HEK293T (cell line): ENCODE measurements at regions of chr12 and their contacts with region 1.

Region 1: GRCh38 chr12:51341259-51342007 is 5.0 kb downstream of the CELA1 start:
- DNase-seq: peak; percentile 71

Region 2: DNA sequence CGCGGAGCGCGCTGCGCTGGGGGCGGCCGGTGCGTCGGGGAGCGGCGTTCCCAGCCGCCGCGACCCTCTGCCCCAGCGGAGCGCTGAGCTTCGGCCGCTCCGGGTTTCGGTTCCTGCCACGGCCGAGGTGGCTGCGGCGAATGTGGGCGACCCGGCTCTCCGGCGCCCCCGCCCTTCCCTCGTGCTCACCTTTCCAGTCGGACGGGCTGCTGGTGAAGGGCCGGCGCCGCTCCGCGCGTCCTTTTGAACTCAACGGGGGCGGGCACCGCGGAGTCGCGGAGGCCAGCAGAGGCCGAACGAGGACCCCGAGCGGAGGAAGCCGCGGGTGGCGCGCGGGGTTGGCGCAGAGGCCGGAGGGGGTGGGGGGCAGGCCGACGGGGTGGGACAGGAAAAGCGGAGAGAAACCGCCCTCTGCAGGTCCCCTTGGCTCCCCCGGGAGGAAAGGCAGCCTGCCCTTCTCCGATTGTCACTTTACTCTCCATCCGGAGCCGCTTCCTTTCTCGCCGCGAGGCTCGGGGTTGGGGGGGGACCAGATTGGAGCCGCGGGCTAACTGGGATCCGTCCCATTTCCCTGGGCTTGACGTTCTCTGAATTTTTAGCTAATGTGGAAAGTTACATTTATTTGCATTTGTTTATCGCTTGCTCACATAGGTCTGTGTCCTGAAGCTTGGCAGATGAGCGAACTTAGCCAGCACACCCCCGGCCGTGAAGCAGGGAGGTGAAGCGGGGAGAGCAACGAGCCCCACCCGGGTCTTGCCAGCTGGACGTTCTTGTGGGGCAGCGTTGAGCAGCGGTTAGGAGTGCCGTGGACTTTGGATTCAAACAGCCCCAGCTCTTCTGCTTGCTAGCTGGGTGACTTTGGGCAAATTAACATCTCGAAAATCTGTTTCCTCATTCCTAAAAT is 71.1 kb before region 1 on chr12 and contains the start of gene SMAGP:
- CTCF ChIA-PET with region 1: interaction called, 11 read pairs
- POLR2A ChIA-PET with region 1: interaction called, 3 read pairs
- DNase-seq: peak; percentile 56

Region 3: GRCh38 chr12:51351913-51352532 is 10.6 kb after region 1 on chr12:
- CTCF ChIA-PET with region 1: interaction called, 16 read pairs
- POLR2A ChIA-PET with region 1: no interaction called
- DNase-seq: peak; percentile 71